ENCODE measurements at regions of chr10 and their contacts with region 1.

Region 1: GRCh38 chr10:102399217-102400089 is 3.9 kb downstream of the NFKB2 start:
- DNase-seq: peak; percentile 91 to 97 (median 97)
- ATAC-seq: peak; percentile 75 to 79
- H3K4me3 ChIP-seq: peak overlapping the region; percentile 52
- H3K27ac ChIP-seq: peak overlapping the region; percentile 28
- H3K4me1 ChIP-seq: peaks cover 2% of the 10 kb centered on the region
- H3K27me3 ChIP-seq: no peaks in the 10 kb centered on the region

Region 2: DNA sequence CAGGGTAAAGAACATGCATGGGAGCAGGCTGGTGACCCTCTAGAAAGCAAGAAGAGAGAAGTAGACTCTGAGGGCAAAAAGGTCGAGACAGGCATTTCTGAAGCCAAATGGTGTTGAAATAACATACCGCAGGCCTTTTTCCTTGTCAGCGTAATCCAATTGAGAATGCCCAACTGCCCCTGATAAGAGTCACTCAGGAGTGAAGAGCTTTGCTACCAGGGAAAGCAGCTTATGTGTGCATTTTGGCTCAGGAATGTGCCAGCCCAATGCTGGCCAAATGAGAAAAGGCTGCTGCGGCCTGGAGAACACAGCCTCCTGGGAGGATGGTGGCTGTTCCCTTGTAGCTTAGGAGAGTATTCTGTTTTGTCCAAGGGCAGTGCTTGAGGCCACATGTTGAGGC is 65.4 kb before region 1 on chr10:
- intact Hi-C with region 1: no loop called
- DNase-seq: peak in 2 of 3 donors; percentile 60 to 76
- ATAC-seq: peak; percentile 71 to 87
- H3K4me3 ChIP-seq: no peak overlapping the region
- H3K27ac ChIP-seq: peak overlapping the region; percentile 70
- H3K4me1 ChIP-seq: peaks cover 6% of the 10 kb centered on the region
- H3K27me3 ChIP-seq: no peaks in the 10 kb centered on the region

Region 3: GRCh38 chr10:102476466-102477141 is 77.2 kb after region 1 on chr10:
- intact Hi-C with region 1: loop called in 1 of 4 experiments (anchors 5 kb)
- DNase-seq: no peak
- ATAC-seq: no peak
- H3K4me3 ChIP-seq: no peak overlapping the region
- H3K27ac ChIP-seq: no peak overlapping the region
- H3K4me1 ChIP-seq: peaks cover 3% of the 10 kb centered on the region
- H3K27me3 ChIP-seq: no peaks in the 10 kb centered on the region

Measured in right cardiac atrium (tissue), 5 donors.